PC-9 (cell line): ENCODE measurements at regions of chr17 and their contacts with region 1.

Region 1: GRCh38 chr17:50487213-50488096 is 8.8 kb downstream of the RSAD1 start:
- DNase-seq: peak; percentile 80 to 91
- H3K4me3 ChIP-seq: no peak overlapping the region
- H3K27ac ChIP-seq: no peak overlapping the region
- H3K4me1 ChIP-seq: peaks cover 25% of the 10 kb centered on the region
- H3K27me3 ChIP-seq: no peaks in the 10 kb centered on the region
- CTCF ChIP-seq: no peak

Region 2: GRCh38 chr17:50452610-50453300 is 34.7 kb before region 1 on chr17:
- CTCF ChIA-PET with region 1: no interaction called
- POLR2A ChIA-PET with region 1: no interaction called
- intact Hi-C with region 1: no loop called
- DNase-seq: peak; percentile 56 to 98
- H3K4me3 ChIP-seq: peak overlapping the region; percentile 39; the same call in 1 of the 2 replicates
- H3K27ac ChIP-seq: peak overlapping the region; percentile 64
- H3K4me1 ChIP-seq: peaks cover 72% of the 10 kb centered on the region
- H3K27me3 ChIP-seq: no peaks in the 10 kb centered on the region
- CTCF ChIP-seq: no peak

Region 3: GRCh38 chr17:50501054-50501453 is 13.6 kb after region 1 on chr17:
- CTCF ChIA-PET with region 1: interaction called, 9 read pairs
- POLR2A ChIA-PET with region 1: no interaction called
- intact Hi-C with region 1: loop called (anchors 1 kb)
- DNase-seq: no peak
- H3K4me3 ChIP-seq: no peak overlapping the region
- H3K27ac ChIP-seq: no peak overlapping the region
- H3K4me1 ChIP-seq: peaks cover 30% of the 10 kb centered on the region
- H3K27me3 ChIP-seq: no peaks in the 10 kb centered on the region
- CTCF ChIP-seq: peak; percentile 64

Region 4: DNA sequence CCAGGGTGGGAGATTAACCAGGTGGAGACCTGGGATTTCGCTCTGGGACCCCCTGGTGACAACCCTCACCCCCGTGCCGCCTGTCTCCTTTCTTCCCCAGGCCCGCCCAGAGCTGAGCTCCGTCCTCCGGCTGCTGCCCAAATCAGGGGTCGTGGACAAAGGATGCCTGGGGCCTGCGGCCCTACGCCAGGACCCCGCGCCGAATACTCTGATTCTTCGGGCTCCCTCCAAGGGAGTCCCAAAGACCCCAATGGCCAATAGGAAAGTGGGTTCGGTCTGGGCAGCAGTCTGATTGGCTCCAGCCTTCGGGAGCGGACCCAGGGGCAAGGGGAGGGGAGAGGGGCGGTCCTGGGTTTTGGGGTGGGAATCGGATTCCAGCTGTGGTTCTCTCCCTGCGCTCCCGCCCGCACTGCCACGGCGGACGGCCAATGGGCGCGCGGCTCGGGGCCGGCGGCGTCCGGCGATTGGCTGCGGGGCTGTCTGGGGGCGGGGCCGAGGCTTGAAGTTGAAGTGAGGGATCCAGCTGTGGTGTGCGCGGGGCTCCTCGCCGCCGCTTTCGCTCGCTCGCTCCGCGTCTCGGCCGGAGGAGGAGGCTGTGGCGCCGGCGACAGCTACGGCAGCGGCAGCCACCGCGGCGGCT is 72.8 kb after region 1 on chr17 and contains the start of gene CACNA1G:
- CTCF ChIA-PET with region 1: interaction called, 11 read pairs
- POLR2A ChIA-PET with region 1: no interaction called
- intact Hi-C with region 1: no loop called
- DNase-seq: peak; percentile 63 to 87
- H3K4me3 ChIP-seq: peak within 1 kb of the TSS; percentile 44
- H3K27ac ChIP-seq: no peak within 1 kb of the TSS
- H3K4me1 ChIP-seq: peaks cover 7% of the 10 kb centered on the region
- H3K27me3 ChIP-seq: peaks cover 21% of the 10 kb centered on the region
- CTCF ChIP-seq: no peak
- total RNA-seq, gene CACNA1G: 0.28 and 0.46 TPM in 2 replicates

Region 5: DNA sequence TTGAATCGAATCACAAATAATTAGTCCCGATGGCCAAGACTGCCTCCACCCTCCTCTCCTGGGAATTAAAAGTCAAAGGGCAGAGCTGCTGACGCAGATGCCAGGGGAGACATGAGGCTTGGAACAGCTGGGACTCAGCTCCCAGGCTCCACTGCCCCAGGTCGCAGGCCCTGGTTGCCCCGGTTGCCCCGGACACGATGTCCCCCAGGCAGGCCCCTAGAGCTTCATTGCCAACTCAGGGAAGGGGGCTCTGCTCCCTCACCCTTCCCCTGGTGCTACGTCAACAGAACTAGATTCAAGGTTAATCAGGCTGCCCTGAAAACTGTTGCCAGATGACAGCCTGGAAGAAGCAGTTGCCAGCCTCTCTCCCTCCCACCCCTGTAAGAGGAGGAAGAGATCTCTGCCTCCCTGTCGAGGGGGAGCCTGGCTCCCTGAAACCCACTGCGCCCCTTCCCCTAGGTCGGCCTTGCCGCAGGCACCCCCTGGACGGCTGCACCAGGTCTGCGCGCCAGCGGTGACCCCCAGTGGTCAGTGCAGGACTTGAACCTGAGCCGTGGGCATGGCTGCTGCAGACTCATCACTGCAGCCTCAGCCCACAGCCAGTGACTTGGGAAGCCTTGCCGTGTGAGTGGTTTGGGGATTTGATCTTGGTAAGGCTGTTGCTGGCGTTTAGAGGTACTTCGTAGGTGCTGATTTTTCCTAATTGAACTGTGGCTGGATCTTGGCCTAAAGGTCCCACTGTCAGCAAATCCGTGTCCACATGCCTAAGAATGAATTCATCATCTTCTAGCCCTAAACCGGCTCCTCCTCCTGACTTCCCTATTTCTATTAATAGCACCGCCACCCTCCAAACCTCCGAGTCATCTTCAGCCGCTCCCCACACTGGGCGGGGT is 462.8 kb after region 1 on chr17:
- CTCF ChIA-PET with region 1: no interaction called
- POLR2A ChIA-PET with region 1: no interaction called
- intact Hi-C with region 1: loop called (anchors 5 kb)
- DNase-seq: peak; percentile 91 to 96
- H3K4me3 ChIP-seq: peak overlapping the region; percentile 34; the same call in 1 of the 2 replicates
- H3K27ac ChIP-seq: peak overlapping the region; percentile 73
- H3K4me1 ChIP-seq: peaks cover 59% of the 10 kb centered on the region
- H3K27me3 ChIP-seq: no peaks in the 10 kb centered on the region
- CTCF ChIP-seq: peak; percentile 90